Heart left ventricle (tissue), 16 donors: ENCODE measurements at regions of chr2 and their contacts with region 1.

Region 1: GRCh38 chr2:15730545-15731212 is 139.0 kb downstream of the DDX1 start:
- DNase-seq: peak; percentile 92 to 97 (median 97)
- ATAC-seq: peak; percentile 87 to 96 (median 92)
- H3K4me3 ChIP-seq: no peak overlapping the region
- H3K27ac ChIP-seq: peak overlapping the region in 8 of 12 donors; percentile 0 to 67 (median 32)
- H3K4me1 ChIP-seq: peaks cover 9 to 59% (median 42%) of the 10 kb centered on the region in 12 donors
- H3K27me3 ChIP-seq: no peaks in the 10 kb centered on the region
- CTCF ChIP-seq: no peak
- POLR2A ChIP-seq: no peak

Region 2: GRCh38 chr2:15673927-15674636 is 56.6 kb before region 1 on chr2:
- intact Hi-C with region 1: no loop called
- DNase-seq: no peak
- ATAC-seq: no peak
- H3K4me3 ChIP-seq: no peak overlapping the region
- H3K27ac ChIP-seq: no peak overlapping the region
- H3K4me1 ChIP-seq: peaks cover 0 to 7% (median 0%) of the 10 kb centered on the region in 12 donors
- H3K27me3 ChIP-seq: peaks cover 0 to 5% (median 0%) of the 10 kb centered on the region in 9 donors
- CTCF ChIP-seq: no peak
- POLR2A ChIP-seq: no peak

Region 3: DNA sequence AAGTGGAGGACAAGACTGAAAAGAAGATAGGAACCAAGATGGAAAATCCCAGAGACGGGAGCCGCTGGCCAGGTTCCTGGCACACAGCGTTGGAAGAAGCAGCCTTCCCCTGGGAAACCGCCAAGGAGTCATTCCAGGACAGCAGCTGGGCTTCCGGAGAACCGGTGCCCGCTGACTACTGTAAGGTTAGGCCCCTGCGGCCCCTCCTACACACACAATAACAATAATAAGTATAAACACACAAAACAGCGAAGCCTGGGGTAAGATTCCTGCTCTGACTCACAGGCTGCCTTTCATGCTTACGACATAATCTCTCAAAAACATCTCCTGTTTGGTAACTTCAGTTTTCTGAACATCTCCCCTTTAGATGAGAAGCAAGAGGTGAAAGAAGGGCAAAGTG is 181.5 kb after region 1 on chr2:
- intact Hi-C with region 1: loop called in 3 of 10 experiments (anchors 5 kb)
- DNase-seq: peak; percentile 71 to 82 (median 78)
- ATAC-seq: peak; percentile 72 to 86 (median 81)
- H3K4me3 ChIP-seq: no peak overlapping the region
- H3K27ac ChIP-seq: peak overlapping the region in 3 of 12 donors; percentile 7 to 23 (median 19)
- H3K4me1 ChIP-seq: peaks cover 0 to 36% (median 24%) of the 10 kb centered on the region in 12 donors
- H3K27me3 ChIP-seq: no peaks in the 10 kb centered on the region
- CTCF ChIP-seq: no peak
- POLR2A ChIP-seq: no peak